Colonic mucosa (tissue), 4 donors: ENCODE measurements at regions of chr12 and their contacts with region 1.

Region 1: GRCh38 chr12:52032804-52033502 is 18.3 kb upstream of the NR4A1 start:
- DNase-seq: peak; percentile 97
- H3K4me3 ChIP-seq: peak overlapping the region; percentile 21
- H3K27ac ChIP-seq: peak overlapping the region; percentile 80
- H3K4me1 ChIP-seq: peaks cover 7% of the 10 kb centered on the region
- H3K27me3 ChIP-seq: no peaks in the 10 kb centered on the region
- CTCF ChIP-seq: no peak

Region 2: DNA sequence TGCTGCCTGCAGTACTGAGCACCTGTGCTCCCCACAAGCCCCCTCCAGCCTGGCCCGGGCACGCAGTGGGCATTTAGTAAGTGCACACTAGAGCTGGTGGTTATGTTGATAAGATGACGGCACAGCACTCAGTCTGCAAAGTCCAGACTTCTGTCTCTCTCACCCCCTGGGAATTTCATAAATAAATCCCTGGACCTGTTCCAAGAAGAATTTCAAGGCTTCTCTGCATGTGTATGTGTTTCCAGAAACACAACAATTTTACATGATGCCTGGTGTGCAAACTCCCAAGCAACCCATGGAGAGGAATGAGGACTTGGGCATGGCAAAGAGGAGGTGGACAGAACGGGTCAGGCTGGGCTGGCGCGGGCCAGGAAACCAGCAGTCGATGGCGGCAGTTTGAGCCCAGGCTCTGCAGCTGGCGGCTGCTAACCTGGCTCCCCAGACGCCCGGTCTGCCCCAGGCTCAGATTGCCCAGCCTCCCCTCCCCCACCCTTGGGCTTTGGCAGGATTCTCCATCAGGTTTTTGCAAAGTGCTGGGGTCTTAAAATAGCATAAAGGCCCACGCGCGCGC is 91.9 kb before region 1 on chr12:
- intact Hi-C with region 1: no loop called
- DNase-seq: no peak
- H3K4me3 ChIP-seq: no peak overlapping the region
- H3K27ac ChIP-seq: no peak overlapping the region
- H3K4me1 ChIP-seq: no peaks in the 10 kb centered on the region
- H3K27me3 ChIP-seq: no peaks in the 10 kb centered on the region
- CTCF ChIP-seq: no peak

Region 3: GRCh38 chr12:52050761-52051541 is 18.0 kb after region 1 on chr12 and contains the start of gene NR4A1:
- intact Hi-C with region 1: loop called (anchors 2 kb)
- DNase-seq: peak; percentile 99
- H3K4me3 ChIP-seq: peak within 1 kb of the TSS; percentile 40
- H3K27ac ChIP-seq: peak within 1 kb of the TSS; percentile 95
- H3K4me1 ChIP-seq: peaks cover 11% of the 10 kb centered on the region
- H3K27me3 ChIP-seq: no peaks in the 10 kb centered on the region
- CTCF ChIP-seq: no peak
- total RNA-seq, gene NR4A1: 51.1 to 52.0 TPM

Region 4: DNA sequence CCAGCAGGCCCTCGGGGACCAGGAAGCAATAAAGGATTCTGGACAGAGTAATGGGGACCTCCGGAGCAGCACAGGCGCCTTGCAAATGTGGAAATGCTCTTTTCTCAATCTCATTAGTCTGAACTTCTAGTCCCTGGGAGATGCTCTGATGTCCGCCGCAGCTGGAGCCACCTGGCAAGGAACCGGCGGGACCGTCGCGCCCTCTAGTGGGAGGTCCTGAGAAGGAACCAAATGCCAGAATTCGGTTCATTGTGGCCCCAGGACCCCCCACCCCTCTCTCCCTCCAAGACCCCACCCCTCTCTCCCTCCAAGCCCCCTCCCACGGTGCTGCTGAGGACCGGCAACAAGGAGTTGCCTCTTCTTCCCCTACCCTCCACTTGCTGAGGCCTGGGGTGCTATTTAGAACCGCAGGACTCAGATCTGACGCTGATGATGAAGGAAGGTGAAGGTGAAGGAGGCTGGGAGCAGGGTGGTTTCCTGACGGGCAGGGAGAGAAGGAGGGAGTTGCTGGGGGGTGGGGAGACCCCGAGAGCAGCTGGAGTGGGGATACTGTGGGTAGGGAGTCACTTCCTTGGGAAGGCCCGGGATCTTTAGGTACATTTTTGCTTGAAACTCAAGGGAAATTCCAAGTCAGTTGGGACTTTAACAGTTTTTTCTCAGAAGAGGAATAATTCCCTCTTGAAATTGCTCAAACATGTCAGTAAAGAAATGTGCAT is 89.0 kb after region 1 on chr12:
- intact Hi-C with region 1: loop called (anchors 5 kb)
- DNase-seq: peak; percentile 67
- H3K4me3 ChIP-seq: no peak overlapping the region
- H3K27ac ChIP-seq: no peak overlapping the region
- H3K4me1 ChIP-seq: no peaks in the 10 kb centered on the region
- H3K27me3 ChIP-seq: no peaks in the 10 kb centered on the region
- CTCF ChIP-seq: peak; percentile 71